ENCODE measurements at regions of chr1 and their contacts with region 1.

Region 1: DNA sequence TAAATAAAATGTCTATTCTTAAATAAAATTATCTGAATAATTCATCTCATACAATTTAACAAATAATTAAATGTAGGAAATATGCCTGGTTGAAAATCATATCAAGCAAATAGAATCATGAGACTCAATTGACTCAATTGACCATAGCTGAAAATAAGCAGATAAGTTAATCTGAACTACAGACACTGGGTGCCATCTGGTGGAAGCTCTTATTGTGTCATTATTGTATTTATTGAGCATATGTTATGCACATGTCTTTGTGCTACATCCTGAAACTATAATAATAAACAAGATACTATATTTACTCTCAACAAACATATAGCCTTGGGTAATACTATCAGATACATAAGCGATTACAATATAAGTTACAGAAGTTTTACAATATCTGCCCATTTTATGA is 41.0 kb downstream of the BRINP3 start:
- DNase-seq: no peak
- H3K4me3 ChIP-seq: no peak overlapping the region
- H3K27ac ChIP-seq: no peak overlapping the region
- H3K4me1 ChIP-seq: no peaks in the 10 kb centered on the region
- H3K27me3 ChIP-seq: no peaks in the 10 kb centered on the region
- CTCF ChIP-seq: peak; percentile 61

Region 2: DNA sequence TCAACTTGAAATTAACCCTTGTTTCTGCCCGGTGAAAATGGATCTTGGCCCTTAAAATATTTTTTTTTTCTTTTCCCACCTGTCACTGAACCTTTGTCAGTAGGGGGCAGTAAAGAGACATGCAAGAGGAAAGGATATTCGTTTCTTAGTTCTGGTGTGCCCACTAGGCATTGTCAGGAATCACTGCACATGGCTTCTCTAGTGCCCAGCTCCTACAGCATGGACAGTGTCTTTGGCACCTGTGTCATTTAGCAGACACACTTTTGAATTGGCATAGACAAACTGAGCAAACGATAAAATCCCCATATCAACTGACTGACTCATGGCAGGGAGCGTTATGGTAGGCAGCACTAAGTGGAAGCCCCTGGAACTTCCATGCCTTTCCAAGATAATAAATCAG is 1007.0 kb before region 1 on chr1:
- CTCF ChIA-PET with region 1: no interaction called
- POLR2A ChIA-PET with region 1: no interaction called
- intact Hi-C with region 1: loop called (anchors 10 kb)
- DNase-seq: peak in 1 of 2 experiments; percentile 38
- H3K4me3 ChIP-seq: no peak overlapping the region
- H3K27ac ChIP-seq: no peak overlapping the region
- H3K4me1 ChIP-seq: no peaks in the 10 kb centered on the region
- H3K27me3 ChIP-seq: no peaks in the 10 kb centered on the region
- CTCF ChIP-seq: peak; percentile 74

Region 3: GRCh38 chr1:189958756-189959155 is 477.9 kb before region 1 on chr1:
- CTCF ChIA-PET with region 1: no interaction called
- POLR2A ChIA-PET with region 1: no interaction called
- intact Hi-C with region 1: no loop called
- DNase-seq: no peak
- H3K4me3 ChIP-seq: no peak overlapping the region
- H3K27ac ChIP-seq: no peak overlapping the region
- H3K4me1 ChIP-seq: no peaks in the 10 kb centered on the region
- H3K27me3 ChIP-seq: no peaks in the 10 kb centered on the region
- CTCF ChIP-seq: no peak

Measured in PC-9 (cell line).